CD8-positive, alpha-beta memory T cell (primary cell): ENCODE measurements at regions of chr1 and their contacts with region 1.

Region 1: GRCh38 chr1:206469933-206470691 is at the start of gene IKBKE:
- DNase-seq: peak; percentile 27 to 70 (median 39)
- H3K4me3 ChIP-seq: peak within 1 kb of the TSS; percentile 96
- H3K4me3 Mint-ChIP-seq: peak within 1 kb of the TSS; percentile 89 to 97 (median 93)
- H3K27ac ChIP-seq: peak within 1 kb of the TSS; percentile 76
- H3K27ac Mint-ChIP-seq: peak within 1 kb of the TSS; percentile 77 to 97 (median 92)
- H3K4me1 ChIP-seq: peaks cover 74% of the 10 kb centered on the region
- H3K4me1 Mint-ChIP-seq: peaks cover 72 to 89% (median 78%) of the 10 kb centered on the region in 3 donors
- H3K27me3 ChIP-seq: no peaks in the 10 kb centered on the region
- H3K27me3 Mint-ChIP-seq: no peaks in the 10 kb centered on the region
- total RNA-seq, gene IKBKE: 17.1 to 18.4 TPM

Region 2: DNA sequence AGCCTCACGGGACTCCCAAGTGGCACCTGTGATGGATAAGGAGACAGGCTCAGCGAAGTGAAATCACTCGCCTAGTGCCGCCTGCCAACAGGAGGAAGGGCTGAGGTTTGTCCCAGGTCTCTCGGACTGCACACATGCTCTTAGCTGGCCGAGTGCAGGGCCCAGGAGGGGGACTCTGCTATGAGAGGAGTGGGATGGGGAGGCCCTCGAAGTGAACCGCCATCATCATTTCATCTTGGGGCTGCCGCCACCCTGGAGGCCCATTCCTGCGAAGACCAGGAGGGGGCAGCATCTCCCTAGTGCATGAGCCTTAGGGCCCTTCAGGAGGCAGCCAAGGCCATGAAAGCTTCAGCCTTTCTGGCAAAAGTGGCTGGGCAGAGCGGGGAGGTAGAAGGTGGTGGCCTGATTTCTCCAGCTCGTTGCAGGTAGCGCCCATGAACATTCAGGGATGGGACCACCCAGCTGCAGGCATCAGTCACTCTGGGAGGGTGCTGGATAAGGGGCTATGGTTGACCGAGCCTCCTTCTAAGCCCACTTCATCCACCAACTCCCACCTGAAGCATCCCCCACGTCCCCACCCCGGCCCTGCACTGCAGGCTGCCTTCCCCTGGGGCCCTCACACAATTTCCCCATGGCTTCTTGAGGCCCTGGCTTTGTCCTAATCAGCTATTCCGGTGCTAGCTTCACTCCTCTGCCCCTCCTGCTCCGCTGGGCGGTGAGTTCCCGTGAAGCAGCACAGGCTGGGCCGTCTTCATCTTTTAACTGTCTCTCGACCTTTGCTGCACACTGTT is 20.1 kb after region 1 on chr1:
- CTCF ChIA-PET with region 1: interaction called, 19 read pairs
- POLR2A ChIA-PET with region 1: no interaction called
- DNase-seq: peak; percentile 45 to 71 (median 51)
- H3K4me3 ChIP-seq: no peak overlapping the region
- H3K4me3 Mint-ChIP-seq: no peak overlapping the region
- H3K27ac ChIP-seq: peak overlapping the region; percentile 27
- H3K27ac Mint-ChIP-seq: peak overlapping the region in 3 of 8 donors; percentile 23 to 60 (median 51)
- H3K4me1 ChIP-seq: no peaks in the 10 kb centered on the region
- H3K4me1 Mint-ChIP-seq: no peaks in the 10 kb centered on the region
- H3K27me3 ChIP-seq: no peaks in the 10 kb centered on the region
- H3K27me3 Mint-ChIP-seq: no peaks in the 10 kb centered on the region

Region 3: DNA sequence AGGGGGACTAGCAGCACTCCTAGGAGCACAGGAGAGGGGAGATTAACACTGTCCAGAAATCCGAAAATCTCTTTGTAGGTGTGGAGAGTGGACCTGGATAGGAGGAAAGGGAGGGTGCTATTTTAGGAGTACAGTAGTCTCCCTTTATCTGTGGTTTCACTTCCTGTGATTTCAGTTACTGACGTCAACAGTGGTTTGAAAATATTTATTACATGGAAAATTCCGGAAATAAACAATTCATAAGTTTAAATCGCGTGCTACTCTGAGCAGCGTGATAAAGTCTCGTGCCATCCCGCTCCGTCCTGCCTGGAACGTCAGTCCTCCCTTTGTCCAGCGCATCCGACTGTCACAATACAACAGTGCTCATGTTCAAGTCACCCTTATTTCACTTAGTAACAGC is 420.6 kb after region 1 on chr1:
- CTCF ChIA-PET with region 1: no interaction called
- POLR2A ChIA-PET with region 1: no interaction called
- DNase-seq: no peak
- H3K4me3 ChIP-seq: no peak overlapping the region
- H3K4me3 Mint-ChIP-seq: peak overlapping the region in 2 of 7 donors; percentile 16 to 49
- H3K27ac ChIP-seq: no peak overlapping the region
- H3K27ac Mint-ChIP-seq: peak overlapping the region in 2 of 8 donors; percentile 7 to 61
- H3K4me1 ChIP-seq: peaks cover 14% of the 10 kb centered on the region
- H3K4me1 Mint-ChIP-seq: peaks cover 3 to 12% (median 12%) of the 10 kb centered on the region in 3 donors
- H3K27me3 ChIP-seq: no peaks in the 10 kb centered on the region
- H3K27me3 Mint-ChIP-seq: peaks cover 5 to 8% of the 10 kb centered on the region in 2 donors